Transverse colon (tissue), 4 donors: ENCODE measurements at regions of chr1 and their contacts with region 1.

Region 1: GRCh38 chr1:15214527-15214926 is 32.5 kb upstream of the FHAD1 start:
- DNase-seq: peak; percentile 36
- H3K4me3 ChIP-seq: no peak overlapping the region
- H3K27ac ChIP-seq: peak overlapping the region; percentile 67 to 84 (median 76)
- H3K4me1 ChIP-seq: peaks cover 6 to 32% (median 25%) of the 10 kb centered on the region in 4 donors
- H3K27me3 ChIP-seq: no peaks in the 10 kb centered on the region
- CTCF ChIP-seq: no peak
- EP300 ChIP-seq: no peak
- POLR2A ChIP-seq: no peak

Region 2: DNA sequence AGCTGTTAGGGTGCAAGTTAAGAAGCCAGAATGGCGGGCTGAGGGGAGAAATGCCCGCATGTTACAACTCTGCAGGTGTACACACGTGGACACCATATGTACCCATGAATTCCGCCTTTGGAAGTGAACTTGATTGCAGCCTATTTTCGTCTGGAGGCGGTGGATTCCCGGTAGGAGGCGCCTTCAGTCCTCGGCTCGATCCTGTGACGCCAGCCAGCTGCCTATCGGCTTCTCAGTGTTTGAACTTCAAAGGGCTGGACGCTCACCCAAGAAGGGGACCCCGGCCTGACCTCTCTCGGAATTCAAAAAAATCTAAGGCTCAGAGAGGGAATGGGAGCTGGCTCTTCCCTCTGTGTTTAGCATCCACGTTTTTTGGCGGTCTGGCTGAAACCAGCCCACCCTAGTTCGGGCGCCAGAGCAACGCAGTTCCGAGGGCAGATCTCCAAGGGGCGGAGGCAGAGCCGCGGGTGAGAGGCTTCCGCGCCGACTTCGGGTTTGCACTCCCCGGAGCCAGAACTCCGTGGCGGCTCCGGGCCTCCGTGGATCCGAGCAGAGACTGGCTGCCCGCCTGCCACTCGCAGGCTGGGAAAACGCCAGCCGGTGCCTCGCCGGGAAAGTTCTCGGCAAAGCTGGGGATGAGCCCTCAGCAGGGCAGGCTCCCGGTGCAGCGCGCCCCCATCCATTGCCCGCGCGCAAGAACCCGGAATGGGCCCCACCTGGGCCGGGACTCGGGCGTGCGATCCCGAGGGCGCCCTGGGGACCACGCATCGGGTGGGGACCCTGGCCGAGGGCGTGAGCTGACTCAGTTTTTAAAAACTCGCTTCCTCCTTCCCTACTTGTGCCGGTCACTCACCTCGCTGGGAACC is 62.0 kb before region 1 on chr1:
- in situ Hi-C with region 1: no loop called
- intact Hi-C with region 1: loop called (anchors 5 kb)
- DNase-seq: peak; percentile 92
- H3K4me3 ChIP-seq: peak overlapping the region; percentile 64 to 90 (median 77)
- H3K27ac ChIP-seq: peak overlapping the region; percentile 91 to 98 (median 96)
- H3K4me1 ChIP-seq: peaks cover under 1 to 43% (median 32%) of the 10 kb centered on the region in 4 donors
- H3K27me3 ChIP-seq: no peaks in the 10 kb centered on the region
- CTCF ChIP-seq: peak; percentile 57 to 83 (median 62)
- EP300 ChIP-seq: no peak
- POLR2A ChIP-seq: peak; percentile 51